Posterior vena cava (tissue), 2 donors: ENCODE measurements at regions of chr12 and their contacts with region 1.

Region 1: DNA sequence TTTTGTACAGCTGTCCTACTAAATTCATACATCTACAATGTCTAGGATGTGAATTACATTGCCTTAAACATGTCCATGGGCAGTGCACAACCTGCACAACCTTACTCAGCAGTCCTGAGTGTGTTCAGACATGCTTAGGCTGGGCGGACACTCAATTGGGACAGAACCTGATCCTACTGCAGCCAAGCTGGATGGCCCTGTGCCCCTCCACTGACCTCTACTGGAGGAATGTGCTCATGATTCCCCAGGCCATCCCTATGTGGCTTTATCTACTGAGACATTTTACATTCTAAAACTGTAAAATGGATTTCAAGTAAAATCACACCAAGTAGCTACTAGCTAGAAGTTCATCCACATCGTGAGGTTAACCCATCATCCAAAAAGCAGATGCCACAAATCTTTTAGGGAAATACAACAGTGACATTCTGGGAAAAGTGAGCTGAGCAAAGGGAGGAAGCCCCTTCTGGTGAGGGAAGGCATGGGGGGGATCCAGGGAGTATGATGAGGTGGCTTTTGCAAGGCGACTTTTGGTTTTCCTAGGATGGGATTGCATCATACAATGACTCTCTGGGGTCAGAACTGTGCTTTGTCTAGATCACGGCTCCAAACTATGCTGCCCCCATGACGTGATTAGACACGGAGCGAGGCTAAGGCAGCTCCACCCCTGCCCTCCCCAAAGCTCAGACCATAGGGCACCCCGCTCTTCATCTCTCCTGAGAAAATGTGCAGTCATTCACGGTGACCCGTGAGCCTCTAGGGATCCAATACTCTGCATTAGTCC is 911.7 kb upstream of the TMEM132C start:
- DNase-seq: no peak

Region 2: DNA sequence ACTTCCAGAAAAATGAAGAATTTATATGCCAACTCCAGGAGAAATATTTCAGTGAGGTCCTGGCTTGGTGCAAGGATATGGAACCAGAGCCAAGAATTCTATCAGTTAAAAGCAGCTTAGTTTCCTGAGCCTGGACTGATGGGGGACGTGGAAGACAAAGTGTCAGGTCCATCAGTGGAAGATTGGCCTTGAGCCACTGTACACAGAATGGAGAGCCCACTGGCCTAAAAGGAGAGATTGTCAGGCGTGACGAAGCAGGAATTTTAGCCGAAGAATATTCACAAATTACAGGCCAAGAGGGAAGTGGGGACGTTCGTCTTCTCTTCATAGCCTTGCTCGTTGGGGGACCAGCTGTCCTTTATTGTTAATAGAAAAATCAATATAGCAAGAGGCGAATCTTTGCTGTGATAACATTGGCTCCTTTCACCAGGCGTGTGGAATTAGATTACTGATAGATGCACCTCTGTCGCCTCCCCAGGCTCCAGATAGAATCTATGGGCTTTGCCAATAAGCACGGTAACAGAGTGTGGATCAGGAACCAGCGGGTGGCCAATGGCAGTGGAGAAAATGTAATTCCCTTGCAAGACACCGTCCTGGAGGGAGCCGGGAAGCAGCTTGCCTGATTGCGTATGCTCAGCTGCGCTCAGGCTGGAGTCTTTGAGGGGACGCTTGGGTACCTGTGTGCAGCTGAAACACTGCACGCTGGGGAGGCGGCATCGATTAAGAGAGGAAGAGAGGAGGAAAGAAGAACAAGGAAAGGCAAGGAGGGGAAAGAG is 968.1 kb after region 1 on chr12:
- intact Hi-C with region 1: loop called in 1 of 2 experiments (anchors 5 kb)
- DNase-seq: no peak